Vagina (tissue), 2 donors: ENCODE measurements at regions of chr17 and their contacts with region 1.

Region 1: GRCh38 chr17:17877529-17878358 is 41.0 kb upstream of the SREBF1 start:
- DNase-seq: no peak
- H3K4me3 ChIP-seq: peak overlapping the region in 1 of 2 donors; percentile 11
- H3K27ac ChIP-seq: peak overlapping the region; percentile 85
- H3K4me1 ChIP-seq: peaks cover 52% of the 10 kb centered on the region
- H3K27me3 ChIP-seq: no peaks in the 10 kb centered on the region
- CTCF ChIP-seq: no peak
- POLR2A ChIP-seq: no peak

Region 2: DNA sequence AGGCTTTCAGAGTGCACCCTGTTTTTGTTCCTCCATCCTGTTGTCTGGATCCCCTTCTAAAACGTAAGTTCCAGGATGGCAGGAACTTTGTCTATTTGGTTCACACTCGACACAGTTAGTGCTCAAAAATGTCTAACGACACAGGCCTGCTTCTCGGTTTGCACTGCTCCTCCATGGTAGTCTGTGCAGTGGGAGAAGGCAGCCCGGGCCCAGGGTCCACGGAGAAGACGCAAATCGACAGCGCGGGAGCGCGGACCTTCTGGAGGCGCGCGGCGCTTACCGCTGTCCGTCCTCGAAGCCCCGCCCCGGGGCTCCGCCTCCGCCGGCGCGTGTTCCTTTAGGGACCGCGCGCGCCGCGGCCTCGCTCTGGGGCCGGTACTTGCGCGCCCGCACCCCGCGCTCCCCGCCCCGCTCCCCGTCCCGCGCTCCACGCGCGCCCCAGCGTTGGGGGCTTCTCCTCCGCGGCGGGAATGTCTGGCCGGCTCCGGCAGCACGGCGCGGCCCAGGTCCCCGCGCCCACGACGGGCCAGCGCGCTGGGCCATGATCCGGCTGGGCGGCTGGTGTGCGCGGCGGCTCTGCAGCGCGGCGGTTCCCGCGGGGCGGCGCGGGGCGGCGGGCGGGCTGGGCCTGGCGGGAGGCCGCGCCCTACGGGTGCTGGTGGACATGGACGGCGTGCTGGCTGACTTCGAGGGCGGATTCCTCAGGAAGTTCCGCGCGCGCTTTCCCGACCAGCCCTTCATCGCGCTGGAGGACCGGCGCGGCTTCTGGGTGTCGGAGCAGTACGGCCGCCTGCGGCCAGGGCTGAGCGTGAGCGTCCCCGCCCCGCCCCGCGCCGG is 574.5 kb before region 1 on chr17 and contains the start of gene NT5M:
- intact Hi-C with region 1: loop called (anchors 10 kb)
- DNase-seq: no peak
- H3K4me3 ChIP-seq: peak within 1 kb of the TSS; percentile 60 to 76
- H3K27ac ChIP-seq: peak within 1 kb of the TSS; percentile 77
- H3K4me1 ChIP-seq: peaks cover 15% of the 10 kb centered on the region
- H3K27me3 ChIP-seq: no peaks in the 10 kb centered on the region
- CTCF ChIP-seq: no peak
- POLR2A ChIP-seq: no peak
- total RNA-seq, gene NT5M: 3.2 TPM

Region 3: DNA sequence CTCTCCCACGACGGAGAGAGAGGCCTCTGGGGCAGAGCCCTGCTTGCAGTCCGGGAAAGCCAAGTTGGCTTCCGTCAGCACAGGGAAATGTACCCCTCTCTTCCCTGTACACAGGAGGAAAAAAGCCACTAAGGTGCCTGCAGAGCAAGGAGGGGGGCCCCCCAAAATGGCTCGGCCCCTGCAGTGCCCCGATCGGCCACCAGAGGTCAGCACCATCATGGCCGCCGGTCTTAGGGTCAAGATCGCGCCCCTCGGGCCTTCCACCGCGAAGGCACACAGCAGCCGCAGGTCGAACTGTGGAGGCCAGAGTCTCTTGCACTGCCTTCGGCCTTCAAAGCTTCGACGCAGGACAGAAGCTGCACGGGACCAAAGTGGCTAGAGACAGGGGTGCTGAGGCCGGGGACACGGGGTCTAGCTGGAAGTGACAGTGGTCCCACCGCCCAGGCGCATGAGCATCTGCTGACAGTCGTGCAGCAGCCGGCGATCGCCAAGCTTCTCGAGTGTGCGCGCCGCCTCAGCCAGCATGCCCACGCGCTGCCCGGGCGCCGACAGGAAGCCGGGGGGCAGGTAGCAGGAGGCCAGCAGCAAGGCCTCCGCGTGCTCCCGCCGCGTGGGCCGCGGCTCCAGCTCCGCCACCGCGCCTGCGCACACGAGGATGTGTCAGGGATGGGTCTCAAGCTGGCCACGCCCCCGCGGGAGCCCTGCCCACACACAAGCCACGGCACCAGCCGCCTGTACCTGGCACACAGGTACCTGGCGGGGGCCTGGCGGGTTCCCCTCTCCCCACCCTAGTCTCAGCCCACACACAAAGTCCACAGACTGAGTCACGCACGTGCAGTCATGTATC is 65.3 kb before region 1 on chr17:
- intact Hi-C with region 1: no loop called
- DNase-seq: no peak
- H3K4me3 ChIP-seq: no peak overlapping the region
- H3K27ac ChIP-seq: peak overlapping the region; percentile 78
- H3K4me1 ChIP-seq: peaks cover 68% of the 10 kb centered on the region
- H3K27me3 ChIP-seq: no peaks in the 10 kb centered on the region
- CTCF ChIP-seq: peak; percentile 99
- POLR2A ChIP-seq: no peak